Common myeloid progenitor, CD34-positive (primary cell): ENCODE measurements at regions of chrX and their contacts with region 1.

Region 1: DNA sequence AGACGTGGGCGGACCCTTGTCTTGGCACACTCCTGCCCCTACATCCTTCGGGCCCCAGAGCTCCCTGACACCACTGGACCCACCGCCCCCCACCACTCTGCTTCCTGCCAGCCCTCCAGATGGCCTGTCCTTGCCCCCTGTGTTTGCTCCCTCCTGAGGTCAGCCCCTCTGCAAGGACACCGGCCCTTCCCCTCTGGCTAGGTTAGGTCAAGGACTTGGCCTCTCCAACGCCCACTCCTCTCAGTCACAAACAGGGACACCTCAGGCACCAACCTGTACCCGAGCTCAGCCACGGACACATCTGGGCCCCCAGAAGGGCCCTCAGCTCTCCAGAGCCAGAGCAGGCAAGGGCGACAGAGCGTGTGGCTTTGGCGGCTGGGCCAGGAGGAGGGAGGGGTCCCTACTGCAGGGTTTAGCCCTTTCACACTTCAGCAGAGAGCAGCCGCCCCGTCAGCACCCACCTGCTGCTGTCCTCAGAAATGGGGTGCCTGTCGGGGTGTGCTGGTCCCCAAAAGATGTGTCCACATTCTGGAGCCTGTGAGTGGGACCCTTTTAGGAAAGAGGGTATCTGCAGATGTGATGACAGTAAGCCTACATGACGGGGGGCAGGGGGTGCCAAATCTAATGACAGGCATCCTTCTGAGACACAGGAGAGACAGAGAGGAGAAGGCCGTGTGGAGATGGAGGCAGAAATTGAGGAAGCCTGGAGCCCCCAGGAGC is 23.5 kb upstream of the DUSP9 start:
- DNase-seq: no peak
- H3K4me3 ChIP-seq: no peak overlapping the region
- H3K27ac ChIP-seq: no peak overlapping the region
- H3K4me1 ChIP-seq: peaks cover 0 to 10% (median 4%) of the 10 kb centered on the region in 4 experiments
- H3K27me3 ChIP-seq: peaks cover 0 to 27% (median 0%) of the 10 kb centered on the region in 5 experiments

Region 2: GRCh38 chrX:153635788-153636622 is 12.5 kb after region 1 on chrX:
- CTCF ChIA-PET with region 1: interaction called, 11 read pairs
- POLR2A ChIA-PET with region 1: no interaction called
- DNase-seq: peak; percentile 36 to 64 (median 50)
- H3K4me3 ChIP-seq: no peak overlapping the region
- H3K27ac ChIP-seq: no peak overlapping the region
- H3K4me1 ChIP-seq: peaks cover 0 to 2% (median under 1%) of the 10 kb centered on the region in 4 experiments
- H3K27me3 ChIP-seq: peaks cover 0 to 42% (median 0%) of the 10 kb centered on the region in 5 experiments